ENCODE measurements at regions of chr1 and their contacts with region 1.

Region 1: GRCh38 chr1:242467556-242468145 is 56.8 kb downstream of the PLD5 start:
- DNase-seq: peak in 1 of 2 donors; percentile 25
- H3K4me3 ChIP-seq: no peak overlapping the region
- CTCF ChIP-seq: no peak
- POLR2A ChIP-seq: no peak

Region 2: GRCh38 chr1:242398351-242398750 is 69.3 kb before region 1 on chr1:
- intact Hi-C with region 1: loop called (anchors 2 kb)
- DNase-seq: no peak
- H3K4me3 ChIP-seq: no peak overlapping the region
- CTCF ChIP-seq: no peak
- POLR2A ChIP-seq: no peak

Region 3: GRCh38 chr1:243325305-243325890 is 857.7 kb after region 1 on chr1:
- intact Hi-C with region 1: loop called (anchors 10 kb)
- DNase-seq: no peak
- H3K4me3 ChIP-seq: no peak overlapping the region
- CTCF ChIP-seq: no peak
- POLR2A ChIP-seq: no peak

Measured in lower leg skin (tissue), 4 donors.